ENCODE measurements at regions of chr11 and their contacts with region 1.

Region 1: DNA sequence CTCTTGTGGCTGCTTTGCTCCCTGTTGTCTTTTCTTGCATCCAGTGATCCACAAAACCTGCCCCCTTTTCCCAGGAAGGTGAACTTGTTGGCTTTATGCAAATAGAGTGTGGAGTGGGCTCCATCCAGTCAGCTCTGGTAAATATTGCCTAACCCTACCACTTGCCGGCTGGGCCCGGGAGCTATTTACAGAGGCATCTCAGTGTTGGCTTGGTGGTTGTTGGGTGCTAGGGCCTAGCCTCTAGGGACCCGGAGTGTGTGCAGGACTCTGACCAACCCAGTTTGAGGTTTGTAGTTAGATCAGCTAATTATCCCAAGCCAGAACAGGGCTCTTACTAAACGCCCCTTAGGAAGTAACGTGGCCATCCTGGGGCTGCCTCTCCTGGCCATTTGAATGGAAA is 40.8 kb upstream of the TLCD5 start:
- DNase-seq: no peak
- ATAC-seq: no peak
- H3K4me3 ChIP-seq: no peak overlapping the region
- H3K27ac ChIP-seq: no peak overlapping the region
- H3K4me1 ChIP-seq: 0 out of 2 replicates have a peak, but pooled peaks cover 4% of the 10 kb centered on the region
- H3K27me3 ChIP-seq: peaks cover 9% of the 10 kb centered on the region
- CTCF ChIP-seq: no peak

Region 2: GRCh38 chr11:120235024-120235861 is 49.1 kb before region 1 on chr11:
- CTCF ChIA-PET with region 1: interaction called, 5 read pairs
- POLR2A ChIA-PET with region 1: interaction called, 16 read pairs
- in situ Hi-C with region 1: no loop called
- intact Hi-C with region 1: no loop called
- DNase-seq: peak; percentile 47
- ATAC-seq: peak; percentile 87
- H3K4me3 ChIP-seq: no peak overlapping the region
- H3K27ac ChIP-seq: no peak overlapping the region
- H3K4me1 ChIP-seq: peaks cover 4% of the 10 kb centered on the region; the same call in 1 of the 2 replicates
- H3K27me3 ChIP-seq: peaks cover 24% of the 10 kb centered on the region
- CTCF ChIP-seq: peak; percentile 97

Measured in Panc1 (cell line).